HepG2 (cell line): ENCODE measurements at regions of chr4 and their contacts with region 1.

Region 1: GRCh38 chr4:86487738-86488348 is 106.3 kb upstream of the PTPN13 start:
- DNase-seq: no peak
- ATAC-seq: no peak
- H3K4me3 ChIP-seq: no peak overlapping the region
- H3K27ac ChIP-seq: no peak overlapping the region
- H3K4me1 ChIP-seq: no peaks in the 10 kb centered on the region
- H3K27me3 ChIP-seq: peaks cover 0 to 1% of the 10 kb centered on the region in 2 experiments; a peak in 2 of 5 replicates
- CTCF ChIP-seq: no peak
- EP300 ChIP-seq: no peak
- POLR2A ChIP-seq: no peak
- RAD21 ChIP-seq: no peak

Region 2: GRCh38 chr4:86530183-86530582 is 42.3 kb after region 1 on chr4:
- CTCF ChIA-PET with region 1: no interaction called
- POLR2A ChIA-PET with region 1: no interaction called
- in situ Hi-C with region 1: no loop called
- intact Hi-C with region 1: loop called (anchors 2 kb)
- DNase-seq: no peak
- ATAC-seq: no peak
- H3K4me3 ChIP-seq: no peak overlapping the region
- H3K27ac ChIP-seq: no peak overlapping the region
- H3K4me1 ChIP-seq: no peaks in the 10 kb centered on the region
- H3K27me3 ChIP-seq: no peaks in the 10 kb centered on the region
- CTCF ChIP-seq: no peak
- EP300 ChIP-seq: no peak
- POLR2A ChIP-seq: no peak
- RAD21 ChIP-seq: no peak

Region 3: GRCh38 chr4:86778175-86778574 is 290.3 kb after region 1 on chr4:
- CTCF ChIA-PET with region 1: no interaction called
- POLR2A ChIA-PET with region 1: no interaction called
- in situ Hi-C with region 1: no loop called
- intact Hi-C with region 1: no loop called
- DNase-seq: no peak
- ATAC-seq: no peak
- H3K4me3 ChIP-seq: no peak overlapping the region
- H3K27ac ChIP-seq: no peak overlapping the region
- H3K4me1 ChIP-seq: no peaks in the 10 kb centered on the region
- H3K27me3 ChIP-seq: no peaks in the 10 kb centered on the region
- CTCF ChIP-seq: no peak
- EP300 ChIP-seq: no peak
- POLR2A ChIP-seq: no peak
- RAD21 ChIP-seq: no peak